ENCODE measurements at regions of chr9 and their contacts with region 1.

Region 1: GRCh38 chr9:84261082-84261746 is 79.3 kb downstream of the SLC28A3 start:
- DNase-seq: peak; percentile 93

Region 2: GRCh38 chr9:84226126-84226525 is 35.1 kb before region 1 on chr9:
- intact Hi-C with region 1: loop called in 1 of 2 experiments (anchors 1 kb)
- DNase-seq: no peak

Measured in posterior vena cava (tissue), 2 donors.